Ovary (tissue), 10 donors: ENCODE measurements at regions of chr9 and their contacts with region 1.

Region 1: DNA sequence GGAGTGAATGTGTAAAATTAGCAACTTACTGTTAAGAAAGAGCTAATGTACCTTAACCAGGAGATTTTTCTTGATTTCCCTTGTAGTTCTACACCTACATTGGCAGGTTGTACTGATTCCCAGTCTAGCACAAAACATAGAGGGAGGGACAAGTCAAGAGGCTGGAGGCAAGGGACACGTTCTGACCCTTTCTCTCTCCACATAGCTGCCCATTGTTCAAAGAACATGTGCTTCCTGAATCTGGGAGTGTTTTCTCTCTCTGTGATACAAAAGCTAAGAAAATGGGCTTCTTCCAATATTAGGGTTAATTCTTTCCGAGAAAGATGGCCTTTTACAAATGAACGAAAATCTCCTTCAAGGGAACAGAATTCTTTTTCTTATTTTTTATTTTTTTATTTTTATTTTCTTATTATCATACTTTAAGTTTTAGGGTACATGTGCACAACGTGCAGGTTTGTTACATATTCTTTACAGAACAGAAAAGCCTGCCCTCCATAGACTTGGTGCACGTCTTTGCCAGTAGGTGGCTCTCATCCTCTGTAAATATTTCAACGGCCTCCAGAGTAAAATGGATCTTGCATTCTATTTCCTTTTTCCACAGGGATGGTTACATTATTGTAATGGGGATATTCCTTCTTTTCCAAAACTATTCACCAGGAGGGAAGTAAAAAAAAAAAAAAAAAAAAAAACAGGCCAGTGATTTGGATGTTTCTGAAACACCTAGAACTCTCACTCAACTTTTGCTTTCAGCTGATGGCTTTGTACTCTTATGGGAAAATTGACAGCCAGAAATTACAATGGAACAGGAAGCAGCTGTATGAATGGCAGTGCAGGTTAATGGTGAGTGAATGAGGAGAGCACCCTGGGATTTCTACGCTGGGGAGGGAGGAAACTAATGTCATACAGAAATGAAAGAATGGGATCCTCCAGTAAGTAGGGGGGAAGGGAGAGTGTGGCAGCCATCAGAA is 13.1 kb upstream of the IFNA5 start:
- DNase-seq: peak; percentile 13 to 36 (median 28)
- H3K4me3 ChIP-seq: no peak overlapping the region
- H3K27ac ChIP-seq: no peak overlapping the region
- H3K4me1 ChIP-seq: peaks cover 1% of the 10 kb centered on the region
- H3K27me3 ChIP-seq: no peaks in the 10 kb centered on the region
- CTCF ChIP-seq: peak in 2 of 3 donors; percentile 17 to 34
- EP300 ChIP-seq: no peak
- POLR2A ChIP-seq: no peak

Region 2: GRCh38 chr9:21395778-21396717 is 77.8 kb after region 1 on chr9:
- intact Hi-C with region 1: loop called in 3 of 4 experiments (anchors 5 to 10 kb)
- DNase-seq: peak; percentile 19 to 58 (median 49)
- H3K4me3 ChIP-seq: peak overlapping the region; percentile 37
- H3K27ac ChIP-seq: no peak overlapping the region
- H3K4me1 ChIP-seq: no peaks in the 10 kb centered on the region
- H3K27me3 ChIP-seq: no peaks in the 10 kb centered on the region
- CTCF ChIP-seq: peak in 2 of 3 donors; percentile 57 to 58
- EP300 ChIP-seq: no peak
- POLR2A ChIP-seq: no peak

Region 3: DNA sequence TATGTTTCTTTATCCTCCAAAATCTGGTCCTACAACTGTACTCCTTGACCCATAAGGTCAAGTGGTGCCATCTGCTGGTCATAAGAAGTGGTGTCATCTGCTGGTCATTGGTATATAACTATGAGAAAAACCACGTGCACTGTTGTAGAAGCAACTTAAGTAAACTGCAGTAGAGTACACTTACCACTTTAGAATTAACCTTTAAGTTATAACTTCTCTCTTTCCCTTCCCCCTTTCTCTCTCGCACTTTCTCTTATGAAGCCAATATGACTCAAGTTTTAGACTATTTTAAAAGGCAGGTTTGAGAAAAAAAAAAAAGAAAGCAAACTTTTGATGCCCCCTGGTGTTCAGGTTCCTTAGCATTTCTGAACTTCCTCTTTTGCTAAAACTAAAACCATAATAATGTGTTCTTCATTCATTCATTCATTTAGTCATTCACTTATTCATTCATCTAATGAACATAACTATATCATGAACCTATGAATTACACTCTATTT is 471.3 kb after region 1 on chr9:
- intact Hi-C with region 1: loop called (anchors 5 to 10 kb)
- DNase-seq: peak in 2 of 5 donors; percentile 26 to 57
- H3K4me3 ChIP-seq: peak overlapping the region; percentile 16
- H3K27ac ChIP-seq: no peak overlapping the region
- H3K4me1 ChIP-seq: no peaks in the 10 kb centered on the region
- H3K27me3 ChIP-seq: no peaks in the 10 kb centered on the region
- CTCF ChIP-seq: peak; percentile 39 to 71 (median 69)
- EP300 ChIP-seq: no peak
- POLR2A ChIP-seq: no peak